ENCODE measurements at regions of chr7 and their contacts with region 1.

Region 1: DNA sequence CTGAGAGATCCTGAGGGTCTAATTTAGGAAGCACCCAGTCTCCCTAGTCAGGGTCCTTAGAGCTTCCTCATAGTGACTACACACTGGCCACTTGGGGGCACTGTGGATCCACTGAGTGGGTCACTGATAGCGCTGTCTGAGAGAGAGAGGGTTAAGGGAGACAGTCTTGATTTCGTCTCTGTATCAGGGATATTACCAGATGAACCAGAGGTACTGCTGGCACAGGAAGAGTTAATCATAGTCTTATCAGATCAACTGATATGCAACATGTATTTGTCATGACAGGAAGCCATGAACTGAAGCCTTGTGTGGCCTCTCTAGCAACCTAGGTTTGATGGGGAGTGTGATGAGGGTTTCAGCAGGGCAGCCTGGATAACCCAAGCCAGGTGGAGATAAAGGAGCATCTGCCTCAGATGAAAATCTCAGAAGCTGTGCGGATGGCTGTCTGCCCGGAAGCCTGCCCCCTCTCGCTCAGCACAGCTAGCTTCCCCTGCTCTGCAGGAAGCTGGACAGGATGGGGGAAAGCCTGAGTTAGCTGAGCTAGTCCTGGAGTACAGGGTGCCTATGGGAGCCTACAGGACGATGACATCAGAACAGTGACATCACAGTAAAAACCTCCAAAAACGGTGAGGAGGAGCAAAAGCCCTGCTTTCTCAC is 214.0 kb upstream of the PRSS1 start:
- DNase-seq: peak; percentile 84 to 89
- H3K4me3 ChIP-seq: no peak overlapping the region
- H3K27ac ChIP-seq: no peak overlapping the region
- H3K4me1 ChIP-seq: peaks cover 31% of the 10 kb centered on the region
- H3K27me3 ChIP-seq: no peaks in the 10 kb centered on the region
- CTCF ChIP-seq: peak; percentile 98

Region 2: GRCh38 chr7:142323706-142324105 is 211.5 kb before region 1 on chr7:
- CTCF ChIA-PET with region 1: interaction called, 7 read pairs
- POLR2A ChIA-PET with region 1: no interaction called
- intact Hi-C with region 1: loop called (anchors 5 kb)
- DNase-seq: peak; percentile 66 to 85
- H3K4me3 ChIP-seq: no peak overlapping the region
- H3K27ac ChIP-seq: no peak overlapping the region
- H3K4me1 ChIP-seq: peaks cover 13% of the 10 kb centered on the region
- H3K27me3 ChIP-seq: no peaks in the 10 kb centered on the region
- CTCF ChIP-seq: peak; percentile 88

Region 3: GRCh38 chr7:142385491-142386340 is 149.5 kb before region 1 on chr7:
- CTCF ChIA-PET with region 1: interaction called, 3 read pairs
- POLR2A ChIA-PET with region 1: interaction called, 10 read pairs
- intact Hi-C with region 1: loop called (anchors 2 kb)
- DNase-seq: peak; percentile 64 to 69
- H3K4me3 ChIP-seq: no peak overlapping the region
- H3K27ac ChIP-seq: no peak overlapping the region
- H3K4me1 ChIP-seq: 0 out of 2 replicates have a peak, but pooled peaks cover 12% of the 10 kb centered on the region
- H3K27me3 ChIP-seq: no peaks in the 10 kb centered on the region
- CTCF ChIP-seq: peak; percentile 79

Region 4: GRCh38 chr7:142478479-142479072 is 56.7 kb before region 1 on chr7:
- CTCF ChIA-PET with region 1: no interaction called
- POLR2A ChIA-PET with region 1: no interaction called
- intact Hi-C with region 1: loop called (anchors 1 kb)
- DNase-seq: peak; percentile 58 to 74
- H3K4me3 ChIP-seq: no peak overlapping the region
- H3K27ac ChIP-seq: no peak overlapping the region
- H3K4me1 ChIP-seq: peaks cover 16% of the 10 kb centered on the region
- H3K27me3 ChIP-seq: no peaks in the 10 kb centered on the region
- CTCF ChIP-seq: peak; percentile 91

Region 5: DNA sequence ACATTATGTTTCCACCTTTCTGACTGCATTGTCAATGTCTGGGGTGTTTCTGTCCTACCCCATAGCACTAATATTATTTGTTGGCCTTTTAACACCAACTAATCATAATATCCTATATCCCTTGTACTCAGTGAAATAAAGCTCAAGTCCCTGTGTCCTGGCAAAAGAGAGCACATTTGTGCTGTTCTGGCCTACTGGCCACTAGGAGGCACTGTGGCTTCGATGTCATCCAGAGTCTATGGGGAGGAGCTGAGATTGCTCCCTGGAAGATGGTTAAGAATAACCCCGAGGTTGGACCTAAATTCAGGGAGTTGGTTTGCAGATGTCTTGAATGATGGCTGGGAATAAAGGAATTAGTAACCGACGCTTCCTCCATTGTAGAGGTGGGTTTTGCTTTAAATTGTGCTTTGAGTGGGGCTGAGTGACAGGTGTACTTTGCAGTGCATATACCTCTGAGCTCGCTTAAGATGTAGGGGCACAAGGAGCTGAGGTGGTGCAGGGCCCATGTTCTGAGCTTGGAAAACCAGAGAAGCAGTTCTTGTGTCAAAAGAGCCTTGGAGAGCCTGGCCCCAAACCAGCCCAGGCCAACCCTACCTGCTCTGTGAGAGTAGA is 22.8 kb after region 1 on chr7:
- CTCF ChIA-PET with region 1: interaction called, 4 read pairs
- POLR2A ChIA-PET with region 1: interaction called, 3 read pairs
- intact Hi-C with region 1: loop called (anchors 1 kb)
- DNase-seq: peak in 1 of 2 experiments; percentile 14
- H3K4me3 ChIP-seq: no peak overlapping the region
- H3K27ac ChIP-seq: peak overlapping the region; percentile 78
- H3K4me1 ChIP-seq: peaks cover 55% of the 10 kb centered on the region
- H3K27me3 ChIP-seq: no peaks in the 10 kb centered on the region
- CTCF ChIP-seq: peak; percentile 74

Region 6: GRCh38 chr7:142632291-142633134 is 97.3 kb after region 1 on chr7:
- CTCF ChIA-PET with region 1: interaction called, 3 read pairs
- POLR2A ChIA-PET with region 1: no interaction called
- intact Hi-C with region 1: loop called (anchors 1 kb)
- DNase-seq: peak; percentile 70 to 72
- H3K4me3 ChIP-seq: no peak overlapping the region
- H3K27ac ChIP-seq: no peak overlapping the region
- H3K4me1 ChIP-seq: no peaks in the 10 kb centered on the region
- H3K27me3 ChIP-seq: no peaks in the 10 kb centered on the region
- CTCF ChIP-seq: peak; percentile 93

Region 7: DNA sequence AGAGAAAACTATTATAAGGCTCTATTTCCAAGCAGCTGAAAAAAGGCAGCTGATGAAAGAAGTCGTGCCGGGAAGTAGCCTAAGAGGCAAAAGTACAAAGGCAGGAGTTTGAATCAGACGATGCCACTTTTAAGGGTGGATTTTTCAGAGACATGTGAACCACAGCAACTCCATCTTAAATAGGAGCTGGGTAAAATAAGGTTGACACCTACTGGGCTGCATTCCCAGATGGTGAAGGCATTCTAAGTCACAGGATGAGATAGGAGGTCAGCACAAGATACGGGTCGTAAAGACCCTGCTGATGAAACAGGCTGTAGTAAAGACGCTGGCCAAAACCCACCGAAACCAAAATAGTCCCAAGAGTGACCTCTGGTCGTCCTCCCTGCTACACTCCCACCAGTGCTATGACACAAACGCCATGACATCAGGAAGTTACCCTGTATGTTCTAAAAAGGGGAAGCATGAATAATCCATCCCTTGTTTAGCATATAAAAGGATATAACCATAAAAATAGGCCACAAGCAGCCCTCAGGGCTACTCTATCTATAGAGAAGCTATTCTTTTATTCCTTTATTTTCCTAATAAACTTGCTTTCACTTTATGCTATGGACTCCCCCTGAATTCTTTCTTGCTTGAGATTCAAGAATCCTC is 168.5 kb after region 1 on chr7:
- CTCF ChIA-PET with region 1: no interaction called
- POLR2A ChIA-PET with region 1: no interaction called
- intact Hi-C with region 1: no loop called
- DNase-seq: no peak
- H3K4me3 ChIP-seq: no peak overlapping the region
- H3K27ac ChIP-seq: no peak overlapping the region
- H3K4me1 ChIP-seq: no peaks in the 10 kb centered on the region
- H3K27me3 ChIP-seq: no peaks in the 10 kb centered on the region
- CTCF ChIP-seq: no peak

Region 8: DNA sequence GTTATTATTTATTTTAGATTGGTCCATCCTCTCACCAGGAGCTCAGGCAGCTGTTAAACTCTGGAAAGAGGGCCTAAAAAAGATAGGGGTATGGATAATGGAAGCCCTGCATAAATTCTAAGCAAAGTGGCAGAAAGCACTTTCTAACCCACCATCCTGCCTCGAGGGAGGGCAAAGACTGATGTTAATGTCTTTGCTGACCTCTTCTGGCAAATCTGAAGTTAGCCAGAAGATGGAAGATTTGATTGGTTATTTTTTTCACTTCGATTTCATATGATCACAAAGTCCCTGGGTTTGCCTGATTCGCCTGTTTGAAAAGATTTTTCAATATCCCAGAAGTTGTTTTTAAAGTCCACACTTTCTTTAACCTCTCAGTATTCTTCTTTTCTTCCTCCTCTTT is 466.9 kb after region 1 on chr7:
- CTCF ChIA-PET with region 1: interaction called, 4 read pairs
- POLR2A ChIA-PET with region 1: interaction called, 7 read pairs
- intact Hi-C with region 1: loop called (anchors 1 kb)
- DNase-seq: peak in 1 of 2 experiments; percentile 12
- H3K4me3 ChIP-seq: no peak overlapping the region
- H3K27ac ChIP-seq: no peak overlapping the region
- H3K4me1 ChIP-seq: peaks cover 4% of the 10 kb centered on the region; the same call in 1 of the 2 replicates
- H3K27me3 ChIP-seq: no peaks in the 10 kb centered on the region
- CTCF ChIP-seq: peak; percentile 73